A673 (cell line): ENCODE measurements at regions of chr17 and their contacts with region 1.

Region 1: DNA sequence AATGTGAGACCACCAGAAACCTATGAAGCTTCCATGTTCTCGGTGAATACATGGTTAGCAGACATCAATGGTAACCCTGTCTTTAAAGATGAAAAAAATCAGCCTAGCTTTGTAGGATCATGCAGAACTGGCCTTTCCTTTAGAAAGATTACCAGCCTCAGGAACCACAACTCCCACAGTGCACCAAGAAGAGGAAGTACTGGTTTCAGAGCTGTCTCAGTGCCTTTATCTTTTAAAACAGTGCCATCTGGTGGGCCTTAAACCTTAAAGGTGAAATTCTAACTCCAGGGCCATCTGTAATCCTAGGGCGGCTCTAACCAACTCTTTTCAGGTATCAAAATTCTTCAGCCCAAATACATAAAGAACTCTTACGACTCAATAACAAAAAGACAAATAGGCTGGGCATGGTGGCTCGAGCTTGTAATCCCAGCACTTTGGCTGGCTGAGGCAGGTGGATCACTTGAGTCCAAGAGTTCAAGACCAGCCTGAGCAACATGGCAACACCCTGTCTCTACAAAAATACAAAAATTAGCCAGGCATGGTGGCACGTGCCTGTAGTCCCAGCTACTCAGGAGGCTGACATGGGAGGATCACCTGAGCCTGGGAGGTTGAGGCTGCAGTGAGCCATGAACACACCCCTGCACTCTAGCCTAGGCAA is 5.4 kb downstream of the ATPAF2 start:
- DNase-seq: peak; percentile 91
- H3K4me3 ChIP-seq: no peak overlapping the region
- H3K27ac ChIP-seq: no peak overlapping the region
- H3K4me1 ChIP-seq: peaks cover 9% of the 10 kb centered on the region
- H3K27me3 ChIP-seq: no peaks in the 10 kb centered on the region
- CTCF ChIP-seq: peak; percentile 70

Region 2: GRCh38 chr17:17877529-17878358 is 155.8 kb before region 1 on chr17:
- CTCF ChIA-PET with region 1: no interaction called
- POLR2A ChIA-PET with region 1: no interaction called
- intact Hi-C with region 1: loop called (anchors 5 kb)
- DNase-seq: peak; percentile 73
- H3K4me3 ChIP-seq: no peak overlapping the region
- H3K27ac ChIP-seq: peak overlapping the region; percentile 58
- H3K4me1 ChIP-seq: peaks cover 15% of the 10 kb centered on the region
- H3K27me3 ChIP-seq: no peaks in the 10 kb centered on the region
- CTCF ChIP-seq: no peak